ENCODE measurements at regions of chr20 and their contacts with region 1.

Region 1: GRCh38 chr20:35303735-35304491 is 11.7 kb upstream of the FAM83C start:
- DNase-seq: peak; percentile 97
- H3K4me3 ChIP-seq: no peak overlapping the region
- H3K4me3 Mint-ChIP-seq: peak overlapping the region; percentile 28
- H3K27ac Mint-ChIP-seq: peak overlapping the region; percentile 54
- H3K4me1 ChIP-seq: peaks cover 44% of the 10 kb centered on the region
- H3K4me1 Mint-ChIP-seq: peaks cover 41% of the 10 kb centered on the region
- H3K27me3 ChIP-seq: no peaks in the 10 kb centered on the region
- H3K27me3 Mint-ChIP-seq: no peaks in the 10 kb centered on the region
- CTCF ChIP-seq: peak; percentile 99 to 100

Region 2: GRCh38 chr20:34512266-34512954 is 791.5 kb before region 1 on chr20:
- CTCF ChIA-PET with region 1: no interaction called
- POLR2A ChIA-PET with region 1: no interaction called
- intact Hi-C with region 1: no loop called
- DNase-seq: no peak
- H3K4me3 ChIP-seq: no peak overlapping the region
- H3K4me3 Mint-ChIP-seq: no peak overlapping the region
- H3K27ac Mint-ChIP-seq: no peak overlapping the region
- H3K4me1 ChIP-seq: peaks cover 6% of the 10 kb centered on the region
- H3K4me1 Mint-ChIP-seq: peaks cover 19% of the 10 kb centered on the region
- H3K27me3 ChIP-seq: no peaks in the 10 kb centered on the region
- H3K27me3 Mint-ChIP-seq: no peaks in the 10 kb centered on the region
- CTCF ChIP-seq: no peak

Region 3: GRCh38 chr20:35225319-35226125 is 78.4 kb before region 1 on chr20:
- CTCF ChIA-PET with region 1: no interaction called
- POLR2A ChIA-PET with region 1: no interaction called
- intact Hi-C with region 1: no loop called
- DNase-seq: no peak
- H3K4me3 ChIP-seq: no peak overlapping the region; the same call in 1 of the 2 replicates
- H3K4me3 Mint-ChIP-seq: peak overlapping the region; percentile 56
- H3K27ac Mint-ChIP-seq: no peak overlapping the region
- H3K4me1 ChIP-seq: peaks cover 12% of the 10 kb centered on the region
- H3K4me1 Mint-ChIP-seq: no peaks in the 10 kb centered on the region
- H3K27me3 ChIP-seq: peaks cover 4% of the 10 kb centered on the region; the same call in 1 of the 2 replicates
- H3K27me3 Mint-ChIP-seq: peaks cover 15% of the 10 kb centered on the region
- CTCF ChIP-seq: no peak

Region 4: DNA sequence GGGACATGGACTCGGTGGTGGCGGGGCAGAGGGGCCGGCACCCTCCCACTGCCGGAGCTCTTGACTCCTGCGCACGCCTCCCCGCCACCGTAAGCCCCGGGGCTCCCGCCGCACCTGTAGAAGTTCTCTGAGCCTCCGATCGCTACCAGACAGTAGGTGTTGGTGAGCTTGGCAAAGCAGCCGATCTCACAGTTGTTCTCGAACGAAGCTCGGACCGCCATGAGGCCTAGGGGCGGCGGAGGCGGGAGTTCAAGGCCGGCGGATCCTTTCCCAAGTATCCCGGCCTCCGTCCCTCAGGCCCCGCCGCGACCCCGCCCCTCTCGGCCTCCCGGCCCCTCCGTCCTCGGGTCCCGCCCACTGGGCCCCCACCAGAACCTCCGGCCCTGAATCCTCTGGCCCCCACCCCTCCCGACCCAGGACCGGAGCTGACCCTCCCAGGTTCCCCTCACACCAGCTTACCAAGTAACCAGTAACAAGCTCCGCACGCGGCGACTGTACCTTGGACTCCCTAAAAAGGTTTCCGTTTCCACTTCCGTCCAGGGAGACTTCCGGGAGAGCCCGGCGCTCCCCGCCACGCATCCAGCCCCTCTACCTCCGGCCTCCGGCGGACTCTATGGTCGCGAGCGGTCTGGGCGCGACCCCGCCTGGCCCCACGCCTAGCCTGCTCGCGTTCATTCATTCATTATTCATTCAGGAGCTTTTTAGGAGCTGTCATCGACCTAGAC is 19.5 kb before region 1 on chr20 and contains the start of gene EIF6:
- CTCF ChIA-PET with region 1: interaction called, 37 read pairs
- POLR2A ChIA-PET with region 1: interaction called, 9 read pairs
- intact Hi-C with region 1: loop called (anchors 1 kb)
- DNase-seq: peak; percentile 97 to 98
- H3K4me3 ChIP-seq: peak within 1 kb of the TSS; percentile 95
- H3K4me3 Mint-ChIP-seq: peak within 1 kb of the TSS; percentile 84
- H3K27ac Mint-ChIP-seq: peak within 1 kb of the TSS; percentile 87
- H3K4me1 ChIP-seq: peaks cover 28% of the 10 kb centered on the region
- H3K4me1 Mint-ChIP-seq: peaks cover 18% of the 10 kb centered on the region
- H3K27me3 ChIP-seq: no peaks in the 10 kb centered on the region
- H3K27me3 Mint-ChIP-seq: no peaks in the 10 kb centered on the region
- CTCF ChIP-seq: no peak
- total RNA-seq, gene EIF6: 403 and 420 TPM in 2 replicates

Region 5: DNA sequence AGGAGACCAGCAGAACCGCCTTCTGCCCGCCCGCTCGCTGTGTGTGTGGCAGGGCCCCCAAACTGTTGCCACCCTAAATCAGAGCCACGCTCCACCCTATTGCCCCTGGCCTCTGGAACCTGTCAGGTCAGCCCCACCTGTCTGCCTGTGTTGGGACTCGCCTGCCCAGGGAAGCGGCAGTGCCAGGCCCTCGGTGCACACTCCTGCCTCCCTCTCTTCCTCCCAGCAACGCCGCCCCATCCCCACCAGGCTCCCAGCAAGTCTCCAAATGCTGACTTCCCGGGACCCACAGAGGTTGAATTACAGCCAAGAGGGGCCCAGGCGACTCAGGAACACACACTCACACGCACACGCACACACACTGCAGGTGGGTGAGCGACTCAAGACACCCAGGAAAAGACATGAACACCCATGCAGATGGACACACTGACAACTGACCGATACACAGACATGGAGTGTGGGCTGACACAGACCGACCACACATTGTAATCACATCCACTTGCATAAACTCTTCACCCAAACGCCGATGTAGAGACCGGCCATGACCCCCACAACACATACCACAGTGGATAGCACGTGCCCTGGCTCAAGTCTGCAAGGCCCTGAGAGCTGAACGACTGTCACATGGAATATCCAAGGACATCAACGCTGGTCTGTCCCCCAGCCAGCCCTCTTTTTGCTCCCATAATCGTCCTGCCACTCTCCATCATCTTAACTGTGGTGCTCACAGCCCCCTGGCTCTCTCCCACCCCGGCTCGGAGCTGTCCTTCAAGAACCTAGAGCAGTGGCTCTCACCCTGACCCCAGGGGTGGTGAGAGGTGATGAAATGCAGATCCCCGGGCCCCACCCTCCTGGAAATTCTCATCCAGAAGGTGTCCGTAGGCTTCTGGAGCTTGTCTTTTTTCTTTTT is 11.3 kb before region 1 on chr20 and contains the start of gene FAM83C:
- CTCF ChIA-PET with region 1: interaction called, 37 read pairs
- POLR2A ChIA-PET with region 1: interaction called, 4 read pairs
- intact Hi-C with region 1: no loop called
- DNase-seq: no peak
- H3K4me3 ChIP-seq: no peak within 1 kb of the TSS
- H3K4me3 Mint-ChIP-seq: no peak within 1 kb of the TSS
- H3K27ac Mint-ChIP-seq: no peak within 1 kb of the TSS
- H3K4me1 ChIP-seq: peaks cover 12% of the 10 kb centered on the region
- H3K4me1 Mint-ChIP-seq: peaks cover 17% of the 10 kb centered on the region
- H3K27me3 ChIP-seq: no peaks in the 10 kb centered on the region
- H3K27me3 Mint-ChIP-seq: no peaks in the 10 kb centered on the region
- CTCF ChIP-seq: no peak
- total RNA-seq, gene FAM83C: 0.09 TPM in 1 of 2 replicates, not detected in the other

Region 6: GRCh38 chr20:35318502-35319157 is 14.7 kb after region 1 on chr20:
- CTCF ChIA-PET with region 1: interaction called, 78 read pairs
- POLR2A ChIA-PET with region 1: interaction called, 7 read pairs
- intact Hi-C with region 1: loop called (anchors 1 kb)
- DNase-seq: peak in 1 of 2 experiments; percentile 72
- H3K4me3 ChIP-seq: no peak overlapping the region
- H3K4me3 Mint-ChIP-seq: no peak overlapping the region
- H3K27ac Mint-ChIP-seq: peak overlapping the region; percentile 86
- H3K4me1 ChIP-seq: peaks cover 55% of the 10 kb centered on the region
- H3K4me1 Mint-ChIP-seq: peaks cover 48% of the 10 kb centered on the region
- H3K27me3 ChIP-seq: no peaks in the 10 kb centered on the region
- H3K27me3 Mint-ChIP-seq: no peaks in the 10 kb centered on the region
- CTCF ChIP-seq: no peak

Region 7: GRCh38 chr20:35329435-35330139 is 25.7 kb after region 1 on chr20:
- CTCF ChIA-PET with region 1: interaction called, 167 read pairs
- POLR2A ChIA-PET with region 1: interaction called, 6 read pairs
- intact Hi-C with region 1: loop called (anchors 1 kb)
- DNase-seq: peak; percentile 91 to 93
- H3K4me3 ChIP-seq: no peak overlapping the region
- H3K4me3 Mint-ChIP-seq: no peak overlapping the region
- H3K27ac Mint-ChIP-seq: peak overlapping the region; percentile 69
- H3K4me1 ChIP-seq: peaks cover 55% of the 10 kb centered on the region
- H3K4me1 Mint-ChIP-seq: peaks cover 32% of the 10 kb centered on the region
- H3K27me3 ChIP-seq: no peaks in the 10 kb centered on the region
- H3K27me3 Mint-ChIP-seq: no peaks in the 10 kb centered on the region
- CTCF ChIP-seq: peak; percentile 92 to 99

Region 8: DNA sequence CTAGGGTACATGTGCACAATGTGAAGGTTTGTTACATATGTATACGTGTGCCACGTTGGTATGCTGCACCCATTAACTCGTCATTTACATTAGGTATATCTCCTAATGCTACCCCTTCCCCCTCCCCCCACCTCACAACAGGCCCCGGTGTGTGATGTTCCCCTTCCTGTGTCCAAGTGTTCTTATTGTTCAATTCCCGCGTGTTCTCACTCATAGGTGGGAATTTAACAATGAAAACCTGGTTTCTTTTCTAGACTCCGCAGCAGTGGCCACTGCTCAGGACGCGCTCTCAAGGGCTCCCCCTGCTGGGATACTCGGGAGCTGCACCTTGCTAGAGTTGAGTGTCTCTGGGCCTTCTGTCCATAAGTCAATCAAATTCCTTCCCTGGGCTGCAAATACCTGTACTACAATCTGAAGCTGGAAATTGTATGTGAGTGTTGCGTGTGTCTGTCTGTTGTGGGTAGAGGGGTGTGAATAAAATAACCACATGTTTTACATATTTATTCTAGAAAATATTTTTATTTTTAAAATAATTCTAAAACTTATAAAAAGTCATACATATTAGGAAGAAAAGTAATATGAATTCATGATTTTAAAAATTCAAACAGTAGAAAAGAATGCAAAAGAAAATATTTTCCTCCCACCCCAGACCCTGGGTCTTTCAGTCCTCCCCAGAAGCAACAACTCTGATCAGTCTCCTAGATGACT is 143.3 kb after region 1 on chr20:
- CTCF ChIA-PET with region 1: interaction called, 19 read pairs
- POLR2A ChIA-PET with region 1: no interaction called
- intact Hi-C with region 1: loop called (anchors 1 kb)
- DNase-seq: peak; percentile 96 to 99
- H3K4me3 ChIP-seq: peak overlapping the region; percentile 28; the same call in 1 of the 2 replicates
- H3K4me3 Mint-ChIP-seq: peak overlapping the region; percentile 73
- H3K27ac Mint-ChIP-seq: peak overlapping the region; percentile 36
- H3K4me1 ChIP-seq: no peaks in the 10 kb centered on the region
- H3K4me1 Mint-ChIP-seq: peaks cover 11% of the 10 kb centered on the region
- H3K27me3 ChIP-seq: no peaks in the 10 kb centered on the region
- H3K27me3 Mint-ChIP-seq: no peaks in the 10 kb centered on the region
- CTCF ChIP-seq: peak; percentile 99 to 100

Region 9: GRCh38 chr20:35454881-35455609 is 151.1 kb after region 1 on chr20 and contains the start of gene CEP250:
- CTCF ChIA-PET with region 1: interaction called, 12 read pairs
- POLR2A ChIA-PET with region 1: interaction called, 3 read pairs
- intact Hi-C with region 1: no loop called
- DNase-seq: peak; percentile 100
- H3K4me3 ChIP-seq: peak within 1 kb of the TSS; percentile 50
- H3K4me3 Mint-ChIP-seq: peak within 1 kb of the TSS; percentile 93
- H3K27ac Mint-ChIP-seq: peak within 1 kb of the TSS; percentile 100
- H3K4me1 ChIP-seq: peaks cover 5% of the 10 kb centered on the region
- H3K4me1 Mint-ChIP-seq: peaks cover 29% of the 10 kb centered on the region
- H3K27me3 ChIP-seq: no peaks in the 10 kb centered on the region
- H3K27me3 Mint-ChIP-seq: no peaks in the 10 kb centered on the region
- CTCF ChIP-seq: no peak
- total RNA-seq, gene CEP250: 117 and 137 TPM in 2 replicates

Region 10: GRCh38 chr20:36132802-36133211 is 828.9 kb after region 1 on chr20:
- CTCF ChIA-PET with region 1: no interaction called
- POLR2A ChIA-PET with region 1: no interaction called
- intact Hi-C with region 1: no loop called
- DNase-seq: no peak
- H3K4me3 ChIP-seq: no peak overlapping the region
- H3K4me3 Mint-ChIP-seq: no peak overlapping the region
- H3K27ac Mint-ChIP-seq: no peak overlapping the region
- H3K4me1 ChIP-seq: no peaks in the 10 kb centered on the region; the same call in 1 of the 2 replicates
- H3K4me1 Mint-ChIP-seq: peaks cover 5% of the 10 kb centered on the region
- H3K27me3 ChIP-seq: no peaks in the 10 kb centered on the region
- H3K27me3 Mint-ChIP-seq: no peaks in the 10 kb centered on the region
- CTCF ChIP-seq: no peak